Breast epithelium (tissue), 4 donors: ENCODE measurements at regions of chr4 and their contacts with region 1.

Region 1: DNA sequence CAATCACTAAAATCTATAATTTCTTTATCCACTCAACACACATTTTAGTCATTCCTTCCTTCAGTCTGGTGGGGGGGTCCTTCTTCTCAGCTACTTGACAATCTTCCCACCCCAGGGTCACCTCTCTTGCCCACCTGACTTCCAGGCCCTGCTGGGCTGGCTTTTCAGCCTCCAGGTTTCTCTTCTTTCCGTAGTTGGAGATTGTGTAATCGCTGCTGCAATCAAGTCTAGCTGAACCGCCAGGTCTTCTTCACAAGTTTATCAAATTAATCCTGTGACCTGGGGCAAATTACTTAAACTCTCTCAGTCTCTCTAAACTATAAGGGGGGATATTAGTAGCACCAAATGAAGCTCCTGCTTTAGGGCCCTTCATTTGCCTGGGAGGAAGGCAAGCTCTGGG is 102.9 kb upstream of the TNIP3 start:
- DNase-seq: no peak
- H3K4me3 ChIP-seq: no peak overlapping the region
- H3K27ac ChIP-seq: no peak overlapping the region
- H3K4me1 ChIP-seq: no peaks in the 10 kb centered on the region
- H3K27me3 ChIP-seq: no peaks in the 10 kb centered on the region
- CTCF ChIP-seq: no peak
- POLR2A ChIP-seq: no peak

Region 2: GRCh38 chr4:121397941-121398601 is 131.1 kb after region 1 on chr4:
- intact Hi-C with region 1: loop called (anchors 5 kb)
- DNase-seq: no peak
- H3K4me3 ChIP-seq: no peak overlapping the region
- H3K27ac ChIP-seq: no peak overlapping the region
- H3K4me1 ChIP-seq: no peaks in the 10 kb centered on the region
- H3K27me3 ChIP-seq: no peaks in the 10 kb centered on the region
- CTCF ChIP-seq: no peak
- POLR2A ChIP-seq: no peak